AG04450 (cell line): ENCODE measurements at regions of chr12 and their contacts with region 1.

Region 1: GRCh38 chr12:72271451-72272090 is 599 bp upstream of the TRHDE start:
- DNase-seq: no peak
- H3K4me3 ChIP-seq: peak overlapping the region; percentile 94
- H3K27ac ChIP-seq: peak overlapping the region; percentile 71
- H3K27me3 ChIP-seq: no peaks in the 10 kb centered on the region
- CTCF ChIP-seq: peak; percentile 24

Region 2: GRCh38 chr12:72081777-72082176 is 189.8 kb before region 1 on chr12:
- CTCF ChIA-PET with region 1: no interaction called
- POLR2A ChIA-PET with region 1: no interaction called
- DNase-seq: no peak
- H3K4me3 ChIP-seq: no peak overlapping the region
- H3K27ac ChIP-seq: no peak overlapping the region
- H3K27me3 ChIP-seq: no peaks in the 10 kb centered on the region
- CTCF ChIP-seq: no peak

Region 3: DNA sequence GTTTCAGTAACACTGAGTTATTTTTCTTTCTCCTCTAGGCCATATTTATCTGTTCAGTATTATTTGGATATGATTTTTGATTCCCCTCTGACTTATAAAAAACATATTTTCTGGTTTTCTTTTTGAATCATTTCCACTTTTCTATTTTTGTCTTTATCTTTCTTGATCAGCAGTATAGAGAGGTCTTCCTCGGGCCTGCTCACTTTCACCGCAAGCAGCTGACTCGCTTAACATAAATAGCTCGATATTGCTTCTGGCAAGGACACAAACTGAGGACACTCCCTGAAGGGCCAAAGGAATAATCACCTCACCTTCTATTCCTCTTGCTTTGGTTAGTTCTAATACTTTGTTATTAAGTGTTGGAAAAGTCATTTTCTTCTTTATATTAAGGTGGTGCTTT is 25.2 kb before region 1 on chr12:
- CTCF ChIA-PET with region 1: no interaction called
- POLR2A ChIA-PET with region 1: no interaction called
- DNase-seq: no peak
- H3K4me3 ChIP-seq: no peak overlapping the region
- H3K27ac ChIP-seq: no peak overlapping the region
- H3K27me3 ChIP-seq: no peaks in the 10 kb centered on the region
- CTCF ChIP-seq: no peak

Region 4: DNA sequence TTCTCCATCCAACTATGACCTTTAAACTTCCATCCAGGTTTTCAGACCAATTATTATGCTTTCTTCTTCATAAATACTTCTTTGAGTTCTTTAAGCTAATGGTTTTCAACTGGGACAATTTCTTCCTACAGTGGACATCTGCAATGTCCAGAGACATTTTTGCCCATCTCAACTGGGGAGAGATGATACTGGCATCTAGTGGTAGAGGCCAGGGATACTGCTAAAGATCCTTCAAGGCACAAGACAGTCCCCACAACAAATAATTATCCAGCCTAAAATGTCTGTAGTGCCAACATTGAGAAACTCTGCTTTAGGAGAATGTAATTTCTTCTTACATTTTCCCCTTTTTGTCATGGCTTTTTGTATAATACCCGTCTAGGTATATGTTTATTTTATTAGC is 11.2 kb after region 1 on chr12:
- CTCF ChIA-PET with region 1: interaction called, 22 read pairs
- POLR2A ChIA-PET with region 1: no interaction called
- DNase-seq: no peak
- H3K4me3 ChIP-seq: no peak overlapping the region
- H3K27ac ChIP-seq: no peak overlapping the region
- H3K27me3 ChIP-seq: no peaks in the 10 kb centered on the region
- CTCF ChIP-seq: peak; percentile 72

Region 5: GRCh38 chr12:72295101-72295500 is 23.5 kb after region 1 on chr12:
- CTCF ChIA-PET with region 1: interaction called, 4 read pairs
- POLR2A ChIA-PET with region 1: interaction called, 10 read pairs
- DNase-seq: no peak
- H3K4me3 ChIP-seq: no peak overlapping the region
- H3K27ac ChIP-seq: peak overlapping the region; percentile 76
- H3K27me3 ChIP-seq: no peaks in the 10 kb centered on the region
- CTCF ChIP-seq: no peak

Region 6: DNA sequence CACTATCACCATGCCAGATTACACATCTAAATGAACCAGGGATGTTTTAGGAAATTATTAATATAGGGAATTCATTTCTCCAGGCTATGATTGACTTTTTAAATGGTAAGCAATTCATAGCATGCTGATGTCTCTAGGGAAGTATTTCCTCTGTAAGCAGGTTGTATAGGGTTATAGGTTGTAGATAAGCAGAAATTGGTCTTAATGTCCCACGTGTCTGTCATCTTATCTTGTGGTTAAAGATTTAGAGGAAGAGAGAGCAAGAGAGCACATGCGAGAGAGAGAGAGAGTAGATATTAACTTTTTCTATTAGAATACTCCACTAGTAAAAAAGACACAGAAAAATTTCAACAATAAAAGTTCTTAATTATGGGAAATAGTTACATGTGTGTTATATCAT is 33.2 kb after region 1 on chr12:
- CTCF ChIA-PET with region 1: interaction called, 4 read pairs
- POLR2A ChIA-PET with region 1: interaction called, 11 read pairs
- DNase-seq: no peak
- H3K4me3 ChIP-seq: no peak overlapping the region
- H3K27ac ChIP-seq: no peak overlapping the region
- H3K27me3 ChIP-seq: no peaks in the 10 kb centered on the region
- CTCF ChIP-seq: no peak

Region 7: GRCh38 chr12:72346363-72346944 is 74.9 kb after region 1 on chr12:
- CTCF ChIA-PET with region 1: interaction called, 12 read pairs
- POLR2A ChIA-PET with region 1: no interaction called
- DNase-seq: peak; percentile 63
- H3K4me3 ChIP-seq: no peak overlapping the region
- H3K27ac ChIP-seq: no peak overlapping the region
- H3K27me3 ChIP-seq: no peaks in the 10 kb centered on the region
- CTCF ChIP-seq: peak; percentile 74